ENCODE measurements at regions of chr2 and their contacts with region 1.

Region 1: DNA sequence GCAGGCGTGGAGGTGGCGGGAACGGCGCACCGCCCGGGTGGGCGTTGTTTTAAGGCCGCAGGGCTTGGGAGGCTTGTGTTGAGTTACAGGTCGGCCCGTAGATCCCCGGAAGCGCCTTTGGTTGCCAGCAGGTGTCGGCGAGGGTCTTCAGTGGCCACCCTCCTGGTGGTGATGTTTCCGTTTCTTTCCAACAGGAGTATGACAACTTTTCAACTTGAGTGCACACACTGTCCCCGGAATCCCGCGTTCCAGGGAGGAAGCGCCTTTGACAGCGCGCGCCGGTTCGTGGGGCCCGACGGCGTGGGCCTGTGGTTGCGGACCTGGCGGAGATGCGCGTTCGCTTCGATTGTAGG is 1.0 kb upstream of the HDAC4 start:
- DNase-seq: peak in 5 of 10 donors; percentile 41 to 92 (median 57)

Region 2: DNA sequence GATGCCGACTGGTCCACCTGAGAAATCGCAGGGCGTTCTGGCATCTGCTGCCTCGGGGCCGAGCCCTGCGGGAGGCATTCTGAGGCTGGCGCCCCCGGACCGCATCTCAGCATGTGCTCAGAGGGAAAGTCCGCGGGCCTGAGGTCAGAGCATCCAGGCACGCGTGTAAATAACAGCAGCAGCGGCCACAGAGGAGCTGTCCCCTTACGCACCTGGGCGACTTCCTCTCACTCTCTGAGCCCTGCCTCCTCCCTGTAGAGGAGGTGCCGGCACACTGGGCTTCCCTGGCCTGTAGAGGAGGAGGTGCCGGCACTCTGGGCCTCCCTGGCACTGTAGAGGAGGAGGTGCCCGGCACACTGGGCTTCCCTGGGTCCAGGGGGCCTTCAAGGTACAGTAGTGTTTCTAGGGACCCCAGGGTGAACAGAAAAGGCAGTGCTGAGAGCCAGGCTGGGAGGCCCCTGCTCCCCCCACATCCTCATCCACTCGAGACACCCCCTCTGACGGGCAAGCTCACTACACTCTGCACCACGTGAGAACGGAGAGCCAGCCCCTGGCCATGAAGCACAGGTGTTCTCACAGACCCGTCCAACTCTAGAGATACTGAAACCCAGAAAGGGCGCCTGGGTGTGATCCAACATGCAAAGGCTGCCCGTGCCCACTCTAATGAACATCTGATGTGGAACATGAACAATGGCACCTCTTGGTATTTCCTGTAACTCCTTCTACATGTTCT is 264.5 kb before region 1 on chr2:
- intact Hi-C with region 1: loop called (anchors 10 kb)
- DNase-seq: peak in 4 of 10 donors; percentile 16 to 84 (median 76)

Region 3: GRCh38 chr2:239440511-239440959 is 38.7 kb after region 1 on chr2:
- intact Hi-C with region 1: loop called (anchors 2 kb)
- DNase-seq: peak; percentile 84 to 99 (median 89)

Region 4: DNA sequence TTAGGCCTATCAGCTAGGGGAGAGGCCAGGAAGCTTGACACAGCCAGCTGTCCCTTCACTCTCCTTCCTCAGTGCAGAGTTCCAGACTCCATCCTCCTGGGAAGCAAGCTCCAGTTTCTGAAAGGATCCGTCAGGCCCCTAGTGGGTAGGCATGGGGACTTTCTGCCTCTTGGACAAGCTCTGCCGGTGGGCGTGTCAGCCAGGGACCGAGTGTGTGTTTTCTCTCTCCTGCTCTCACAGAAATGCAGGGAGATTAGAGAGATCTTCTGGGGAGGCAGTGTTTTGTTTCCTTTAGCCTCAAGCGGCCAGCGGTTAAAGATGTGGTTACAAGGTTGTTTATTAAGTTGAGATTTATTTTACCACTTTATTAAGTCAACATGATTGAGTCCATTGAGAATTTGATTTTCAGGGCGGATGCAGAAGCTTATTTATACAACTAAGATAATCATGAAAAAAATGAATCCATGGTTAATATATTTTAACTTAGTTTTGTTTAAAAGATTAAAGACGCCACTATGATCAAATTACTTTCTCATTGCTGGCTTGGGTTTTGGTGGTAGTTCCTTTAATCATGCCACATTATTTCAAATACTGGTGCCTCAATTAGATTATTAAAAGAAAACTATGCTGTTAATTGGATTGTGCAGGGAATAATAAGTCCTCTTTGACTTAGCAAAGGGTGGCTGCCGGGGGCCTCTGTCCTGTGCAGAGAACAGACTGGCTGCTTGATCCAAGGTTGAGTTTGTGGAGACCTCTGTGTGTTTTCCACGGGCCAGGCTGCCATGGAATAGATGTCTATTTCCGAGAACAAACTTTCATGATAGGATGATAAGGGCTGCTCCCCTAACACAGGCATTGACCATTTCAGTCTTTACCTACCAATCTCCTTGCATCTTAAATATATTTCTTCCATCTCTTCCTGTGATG is 768.8 kb after region 1 on chr2:
- intact Hi-C with region 1: no loop called
- DNase-seq: peak in 3 of 10 donors; percentile 11 to 73 (median 55)

Measured in posterior cingulate gyrus (tissue), 11 donors.